Activated B cell treated with CpG ODN at 0.5 μM for 24 hours (primary cell): ENCODE measurements at regions of chr1 and their contacts with region 1.

Region 1: DNA sequence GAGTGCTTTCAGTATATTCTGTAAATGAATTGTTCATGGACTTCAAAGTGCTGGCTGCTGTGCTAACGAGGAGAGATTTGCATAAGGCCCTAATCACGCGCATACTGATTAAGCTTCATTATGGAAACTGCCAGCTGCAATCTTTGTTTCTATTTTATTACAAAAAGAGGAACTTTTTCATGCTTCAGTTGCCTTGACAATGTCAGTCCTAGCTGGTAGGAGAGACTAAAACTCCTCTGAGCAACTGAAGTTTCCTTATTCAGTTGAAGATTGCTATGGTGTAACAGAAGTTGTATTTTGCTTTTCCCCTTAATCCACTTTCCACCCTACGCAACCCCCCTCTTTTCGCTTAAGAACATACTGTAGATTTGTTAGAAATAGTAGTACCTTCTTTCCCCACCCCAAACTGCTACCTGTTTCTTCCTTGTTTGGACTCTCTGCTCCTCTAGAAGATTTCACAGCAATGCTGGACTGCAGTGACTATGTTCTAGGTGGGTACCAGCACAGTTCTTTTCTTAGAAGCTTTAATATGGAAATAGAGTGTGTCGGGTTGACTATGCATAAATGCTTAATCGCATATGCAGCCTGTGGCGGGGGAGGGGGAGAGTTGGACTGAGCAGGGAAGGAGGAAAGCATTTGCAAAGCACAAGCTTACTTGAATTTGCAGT is 108.3 kb downstream of the POU2F1 start:
- DNase-seq: peak; percentile 33
- ATAC-seq: peak; percentile 80
- H3K4me3 Mint-ChIP-seq: peak overlapping the region; percentile 84
- H3K27ac Mint-ChIP-seq: peak overlapping the region; percentile 97
- H3K4me1 Mint-ChIP-seq: peaks cover 65% of the 10 kb centered on the region
- H3K27me3 Mint-ChIP-seq: no peaks in the 10 kb centered on the region
- CTCF ChIP-seq: no peak

Region 2: DNA sequence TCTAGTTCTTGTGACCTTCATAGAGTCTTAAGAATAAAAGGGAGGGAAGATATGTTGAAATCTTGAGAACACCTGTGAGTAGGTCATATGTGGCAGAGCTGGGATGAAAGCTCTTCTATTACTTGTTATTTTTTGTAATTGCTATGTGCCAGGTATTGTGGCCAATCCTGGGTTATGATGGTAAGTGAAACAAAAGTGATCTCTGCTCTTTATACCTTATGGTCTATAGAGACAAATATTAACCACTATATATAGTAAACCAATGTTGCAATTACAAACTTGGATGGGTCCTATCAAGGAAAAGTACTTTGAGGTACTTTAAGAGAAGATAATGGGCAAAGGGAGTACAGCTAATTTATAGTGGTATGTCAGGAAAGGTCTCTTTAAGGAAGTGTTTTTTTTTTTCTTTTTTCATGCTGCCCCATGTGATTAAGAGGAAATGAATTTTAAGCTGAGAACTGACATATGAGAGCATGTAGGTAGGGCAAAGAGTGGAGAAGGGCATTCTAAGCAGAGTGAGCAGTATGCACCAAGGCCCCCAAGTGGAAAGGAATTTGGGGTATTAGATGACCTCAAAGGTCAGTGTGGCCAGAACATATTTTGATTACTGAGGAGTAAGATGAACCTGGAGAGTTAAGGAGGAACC is 65.0 kb before region 1 on chr1:
- CTCF ChIA-PET with region 1: interaction called, 21 read pairs
- POLR2A ChIA-PET with region 1: interaction called, 15 read pairs
- intact Hi-C with region 1: no loop called
- DNase-seq: no peak
- ATAC-seq: peak; percentile 43
- H3K4me3 Mint-ChIP-seq: no peak overlapping the region
- H3K27ac Mint-ChIP-seq: no peak overlapping the region
- H3K4me1 Mint-ChIP-seq: peaks cover 12% of the 10 kb centered on the region
- H3K27me3 Mint-ChIP-seq: no peaks in the 10 kb centered on the region
- CTCF ChIP-seq: no peak

Region 3: DNA sequence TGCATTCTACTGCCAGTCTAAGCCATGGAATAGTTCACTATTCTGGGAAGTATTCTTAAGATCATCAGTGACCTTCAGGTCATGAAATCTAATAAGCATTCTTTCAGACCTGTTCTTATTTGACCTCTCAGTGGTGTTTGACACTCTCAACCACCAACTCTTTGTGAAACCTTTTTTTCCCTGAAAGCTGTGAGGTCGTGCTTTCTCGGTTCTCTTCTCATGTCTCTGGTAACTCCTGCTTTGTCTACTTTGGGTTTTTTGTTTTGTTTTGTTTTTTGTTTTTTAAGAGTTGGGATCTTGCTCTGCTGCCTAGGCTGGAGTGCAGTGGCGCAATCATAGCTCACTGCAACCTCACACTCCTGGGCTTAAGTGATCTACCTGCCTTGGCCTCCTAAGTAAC is 52.0 kb before region 1 on chr1:
- CTCF ChIA-PET with region 1: no interaction called
- POLR2A ChIA-PET with region 1: interaction called, 11 read pairs
- intact Hi-C with region 1: no loop called
- DNase-seq: no peak
- ATAC-seq: no peak
- H3K4me3 Mint-ChIP-seq: no peak overlapping the region
- H3K27ac Mint-ChIP-seq: no peak overlapping the region
- H3K4me1 Mint-ChIP-seq: peaks cover 39% of the 10 kb centered on the region
- H3K27me3 Mint-ChIP-seq: no peaks in the 10 kb centered on the region
- CTCF ChIP-seq: no peak

Region 4: DNA sequence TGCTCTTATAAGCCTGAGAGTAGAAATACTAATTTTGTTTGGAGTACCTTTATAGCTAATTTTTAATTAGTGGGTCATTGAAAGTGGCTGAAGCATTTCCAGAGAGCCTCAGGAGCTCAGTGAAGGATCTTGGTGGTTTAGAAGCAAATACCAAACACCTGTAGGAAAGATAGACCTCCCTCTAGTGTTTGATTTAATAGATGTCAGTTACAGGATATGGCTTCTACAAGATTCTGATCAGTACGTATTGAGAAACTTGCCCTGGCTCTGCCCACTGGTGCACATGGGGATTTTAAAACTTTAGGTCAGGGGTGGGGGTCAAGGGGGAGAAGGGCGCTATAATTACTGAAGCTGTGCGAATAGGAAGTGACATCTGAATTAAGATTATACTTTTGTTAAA is 13.9 kb after region 1 on chr1:
- CTCF ChIA-PET with region 1: interaction called, 13 read pairs
- POLR2A ChIA-PET with region 1: interaction called, 9 read pairs
- intact Hi-C with region 1: loop called (anchors 1 kb)
- DNase-seq: no peak
- ATAC-seq: peak; percentile 70
- H3K4me3 Mint-ChIP-seq: no peak overlapping the region
- H3K27ac Mint-ChIP-seq: no peak overlapping the region
- H3K4me1 Mint-ChIP-seq: peaks cover 17% of the 10 kb centered on the region
- H3K27me3 Mint-ChIP-seq: no peaks in the 10 kb centered on the region
- CTCF ChIP-seq: no peak

Region 5: GRCh38 chr1:167499664-167500101 is 170.7 kb after region 1 on chr1:
- CTCF ChIA-PET with region 1: no interaction called
- POLR2A ChIA-PET with region 1: no interaction called
- intact Hi-C with region 1: loop called (anchors 5 kb)
- DNase-seq: peak; percentile 31
- ATAC-seq: peak; percentile 96
- H3K4me3 Mint-ChIP-seq: peak overlapping the region; percentile 64
- H3K27ac Mint-ChIP-seq: peak overlapping the region; percentile 59
- H3K4me1 Mint-ChIP-seq: peaks cover 38% of the 10 kb centered on the region
- H3K27me3 Mint-ChIP-seq: peaks cover 67% of the 10 kb centered on the region
- CTCF ChIP-seq: no peak